ENCODE measurements at regions of chr3 and their contacts with region 1.

Region 1: DNA sequence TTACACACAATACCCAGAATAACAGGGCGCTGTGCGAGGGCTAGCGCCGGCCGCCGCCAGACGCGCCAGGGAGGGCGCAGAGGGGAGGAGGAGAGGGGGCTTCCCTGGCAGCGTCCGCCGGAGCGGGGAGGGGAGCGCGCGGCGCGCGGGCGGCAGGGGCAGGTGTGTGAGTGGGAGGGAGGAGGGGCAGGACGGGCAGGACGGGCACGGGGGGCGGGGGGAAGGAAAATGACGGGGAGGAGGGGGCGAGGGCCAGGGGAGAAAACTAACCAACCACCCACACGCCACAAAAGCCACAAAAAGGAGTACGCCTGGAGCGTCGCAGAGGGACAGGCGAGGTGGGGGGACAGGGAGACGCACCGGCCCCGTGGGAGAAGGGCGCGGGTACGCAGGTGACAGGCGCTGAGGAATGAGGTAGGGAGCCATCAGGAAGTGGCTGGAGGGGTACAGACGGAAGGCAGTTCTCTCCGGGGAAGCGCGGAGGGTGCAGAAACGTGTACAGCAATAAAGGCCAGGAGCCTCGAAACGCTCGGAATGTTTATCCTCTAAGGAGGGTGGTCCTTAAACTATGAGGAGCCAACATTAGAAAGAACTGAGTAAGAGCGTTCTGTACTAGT is 610 bp upstream of the SATB1 start:
- DNase-seq: no peak
- ATAC-seq: peak; percentile 35
- H3K4me3 ChIP-seq: peak overlapping the region; percentile 84
- H3K27ac ChIP-seq: no peak overlapping the region
- H3K4me1 ChIP-seq: no peaks in the 10 kb centered on the region; the same call in 1 of the 2 replicates
- H3K27me3 ChIP-seq: peaks cover 9% of the 10 kb centered on the region
- CTCF ChIP-seq: no peak
- POLR2A ChIP-seq: no peak
- RAD21 ChIP-seq: no peak

Region 2: DNA sequence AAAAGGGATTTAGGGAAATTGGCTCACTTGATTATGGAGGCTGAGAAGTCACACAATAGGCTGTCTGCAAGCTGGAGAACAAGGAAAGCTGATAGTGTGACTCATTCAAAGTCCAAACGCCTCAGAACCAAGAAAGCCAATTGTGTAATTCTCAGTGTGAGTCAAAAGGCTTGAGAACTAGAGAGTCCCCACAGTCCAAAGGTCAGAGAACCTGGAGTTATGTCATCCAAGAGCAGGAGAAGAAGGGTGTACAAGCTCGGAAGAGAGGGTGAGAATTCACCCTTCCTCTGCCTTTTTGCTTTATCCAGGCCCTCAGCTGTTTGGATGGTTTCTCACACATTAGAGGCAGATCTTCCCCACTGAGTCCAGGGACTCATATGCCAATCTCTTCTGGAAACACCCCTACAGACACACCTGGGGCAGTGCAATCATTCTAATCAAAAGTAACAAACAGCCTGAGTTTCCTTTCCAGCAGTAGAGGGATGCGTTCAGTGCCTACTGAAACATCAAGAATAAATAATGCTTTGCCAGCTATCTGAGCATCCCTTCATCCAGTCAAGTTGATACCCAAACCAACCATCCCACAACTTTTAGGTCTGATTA is 272.1 kb before region 1 on chr3:
- CTCF ChIA-PET with region 1: no interaction called
- POLR2A ChIA-PET with region 1: no interaction called
- dilution Hi-C with region 1: no loop called
- in situ Hi-C with region 1: no loop called
- intact Hi-C with region 1: no loop called
- DNase-seq: peak; percentile 69
- ATAC-seq: peak; percentile 53
- H3K4me3 ChIP-seq: no peak overlapping the region
- H3K27ac ChIP-seq: no peak overlapping the region
- H3K4me1 ChIP-seq: no peaks in the 10 kb centered on the region
- H3K27me3 ChIP-seq: no peaks in the 10 kb centered on the region
- CTCF ChIP-seq: no peak
- POLR2A ChIP-seq: no peak
- RAD21 ChIP-seq: no peak

Region 3: DNA sequence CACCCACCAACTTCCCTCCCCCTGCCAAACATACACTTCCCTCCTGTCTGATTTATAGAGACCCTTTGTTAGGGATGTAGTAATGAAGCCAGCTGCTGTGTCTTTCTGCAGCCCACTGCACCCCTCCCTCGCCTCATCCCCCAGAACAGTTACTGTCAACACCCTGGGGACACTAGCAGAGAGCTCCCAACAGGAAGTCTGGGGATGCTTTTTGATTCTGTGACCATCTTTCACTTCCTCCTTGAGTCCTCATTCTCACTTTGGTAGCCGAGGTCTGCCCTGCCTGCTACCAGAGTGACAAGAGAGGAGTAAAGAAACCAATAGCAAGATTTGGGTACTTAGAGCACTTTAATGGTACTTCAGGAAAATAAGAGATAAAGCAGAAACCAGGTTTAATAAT is 202.2 kb before region 1 on chr3:
- CTCF ChIA-PET with region 1: no interaction called
- POLR2A ChIA-PET with region 1: no interaction called
- dilution Hi-C with region 1: no loop called
- in situ Hi-C with region 1: no loop called
- intact Hi-C with region 1: no loop called
- DNase-seq: no peak
- ATAC-seq: no peak
- H3K4me3 ChIP-seq: no peak overlapping the region
- H3K27ac ChIP-seq: no peak overlapping the region
- H3K4me1 ChIP-seq: no peaks in the 10 kb centered on the region
- H3K27me3 ChIP-seq: no peaks in the 10 kb centered on the region
- CTCF ChIP-seq: no peak
- POLR2A ChIP-seq: no peak
- RAD21 ChIP-seq: no peak

Region 4: GRCh38 chr3:18440066-18440722 is 14.4 kb after region 1 on chr3:
- CTCF ChIA-PET with region 1: no interaction called
- POLR2A ChIA-PET with region 1: no interaction called
- dilution Hi-C with region 1: no loop called
- in situ Hi-C with region 1: no loop called
- intact Hi-C with region 1: loop called (anchors 2 kb)
- DNase-seq: peak; percentile 17
- ATAC-seq: no peak
- H3K4me3 ChIP-seq: no peak overlapping the region
- H3K27ac ChIP-seq: no peak overlapping the region
- H3K4me1 ChIP-seq: no peaks in the 10 kb centered on the region
- H3K27me3 ChIP-seq: peaks cover 19% of the 10 kb centered on the region
- CTCF ChIP-seq: no peak
- POLR2A ChIP-seq: no peak
- RAD21 ChIP-seq: no peak

Measured in IMR-90 (cell line).